Heart right ventricle (tissue), 16 donors: ENCODE measurements at regions of chr1 and their contacts with region 1.

Region 1: GRCh38 chr1:225361176-225361575 is 66.7 kb downstream of the LBR start:
- DNase-seq: no peak
- ATAC-seq: no peak
- H3K4me3 ChIP-seq: no peak overlapping the region
- H3K27ac ChIP-seq: no peak overlapping the region
- H3K4me1 ChIP-seq: no peaks in the 10 kb centered on the region
- H3K27me3 ChIP-seq: peaks cover 0 to 27% (median 2%) of the 10 kb centered on the region in 7 donors
- CTCF ChIP-seq: no peak

Region 2: DNA sequence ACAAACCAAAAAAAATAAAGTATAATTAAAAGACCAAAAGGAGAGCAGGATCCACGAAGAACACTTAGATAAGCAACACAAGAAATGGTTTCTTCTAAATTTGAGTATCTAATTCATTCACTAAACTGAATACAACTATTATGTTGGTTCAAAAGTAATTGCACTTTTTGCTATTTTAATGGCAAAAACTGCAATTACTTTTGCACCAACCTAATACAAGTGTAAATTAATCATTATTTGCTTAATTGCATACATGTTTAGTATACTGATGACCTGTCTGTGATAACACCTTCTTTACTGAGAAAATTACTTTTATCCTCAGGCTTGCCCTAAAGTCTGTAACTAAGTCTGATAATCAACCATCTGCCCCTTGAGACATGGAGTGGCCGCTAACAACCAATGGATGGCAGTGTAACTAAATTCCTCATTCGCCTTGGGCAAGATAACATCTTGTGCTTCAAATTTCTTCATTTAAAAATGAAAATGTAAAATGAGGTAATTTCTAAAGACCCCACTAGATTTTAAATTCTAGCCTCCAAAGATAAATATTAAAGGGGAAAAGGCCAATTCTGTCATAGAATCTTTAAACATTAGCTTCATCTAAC is 206.5 kb after region 1 on chr1:
- intact Hi-C with region 1: no loop called
- DNase-seq: no peak
- ATAC-seq: no peak
- H3K4me3 ChIP-seq: no peak overlapping the region
- H3K27ac ChIP-seq: no peak overlapping the region
- H3K4me1 ChIP-seq: peaks cover 0 to 46% (median 23%) of the 10 kb centered on the region in 9 donors
- H3K27me3 ChIP-seq: no peaks in the 10 kb centered on the region
- CTCF ChIP-seq: peak in 5 of 9 donors; percentile 11 to 37 (median 25)

Region 3: DNA sequence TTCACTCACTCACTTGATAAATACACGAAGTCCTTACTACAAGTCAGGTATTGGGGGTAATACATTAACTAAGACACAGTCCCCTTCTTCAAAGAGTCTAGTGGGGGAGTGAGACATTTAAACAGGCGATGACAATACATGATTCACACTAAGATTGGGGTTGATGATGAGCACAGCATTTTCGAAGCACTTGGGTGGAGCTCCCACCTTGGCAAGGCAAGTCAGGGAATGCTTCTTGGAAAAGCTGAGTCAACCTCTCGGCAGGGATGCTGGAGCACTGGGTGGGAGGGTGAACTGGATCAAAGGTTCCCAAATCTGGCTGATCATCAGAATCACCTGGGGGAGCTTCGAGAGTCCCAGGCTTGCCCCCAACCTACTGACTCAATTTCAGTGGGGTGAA is 349.6 kb after region 1 on chr1:
- intact Hi-C with region 1: loop called in 1 of 10 experiments (anchors 10 kb)
- DNase-seq: no peak
- ATAC-seq: no peak
- H3K4me3 ChIP-seq: no peak overlapping the region
- H3K27ac ChIP-seq: no peak overlapping the region
- H3K4me1 ChIP-seq: peaks cover 0 to 7% (median 0%) of the 10 kb centered on the region in 9 donors
- H3K27me3 ChIP-seq: no peaks in the 10 kb centered on the region
- CTCF ChIP-seq: no peak